ENCODE measurements at regions of chr5 and their contacts with region 1.

Region 1: DNA sequence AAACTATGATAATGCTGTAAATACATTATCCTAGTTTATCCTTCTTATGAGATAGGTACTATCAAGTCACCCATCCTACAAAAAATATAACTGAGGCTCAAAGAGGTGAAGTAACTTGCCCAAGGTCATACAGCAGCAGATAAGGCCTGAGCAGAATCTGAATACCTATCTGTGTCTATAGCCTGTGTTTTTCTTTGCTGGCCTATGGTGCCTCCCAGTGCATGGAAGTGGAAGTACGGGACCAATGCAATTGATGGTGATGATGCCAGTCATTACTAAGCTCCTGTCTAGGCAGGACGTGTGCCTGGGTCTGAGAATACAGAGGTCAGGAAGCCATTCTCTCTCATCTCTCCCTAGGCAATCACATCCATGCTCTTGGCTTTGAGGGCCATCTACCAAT is 67.8 kb downstream of the FAT2 start:
- DNase-seq: peak; percentile 60
- ATAC-seq: peak; percentile 92
- H3K4me3 ChIP-seq: no peak overlapping the region
- H3K27ac ChIP-seq: no peak overlapping the region
- H3K4me1 ChIP-seq: no peaks in the 10 kb centered on the region
- H3K27me3 ChIP-seq: peaks cover 0 to 12% of the 10 kb centered on the region in 2 experiments; a peak in 3 of 5 replicates
- CTCF ChIP-seq: peak; percentile 73
- EP300 ChIP-seq: no peak
- POLR2A ChIP-seq: no peak
- RAD21 ChIP-seq: peak; percentile 69

Region 2: DNA sequence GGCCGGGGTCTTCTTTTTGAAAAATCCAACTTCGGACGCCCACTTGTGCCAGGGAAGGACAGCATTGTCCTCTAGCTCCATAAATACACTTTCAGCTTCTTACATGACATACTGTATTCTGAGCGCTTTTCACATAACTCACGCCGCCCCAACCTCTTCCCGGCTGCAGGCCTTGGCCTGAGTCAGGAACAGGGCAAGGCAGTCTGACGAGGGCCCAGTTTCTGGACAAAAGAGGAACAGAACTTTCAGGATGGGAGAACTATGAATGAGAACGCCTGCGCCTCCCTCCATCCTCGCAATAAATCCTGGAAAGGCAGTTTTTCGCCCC is 765.2 kb before region 1 on chr5:
- CTCF ChIA-PET with region 1: no interaction called
- POLR2A ChIA-PET with region 1: no interaction called
- in situ Hi-C with region 1: no loop called
- intact Hi-C with region 1: no loop called
- DNase-seq: no peak
- ATAC-seq: peak; percentile 56
- H3K4me3 ChIP-seq: peak overlapping the region; percentile 84 to 93 (median 86)
- H3K27ac ChIP-seq: peak overlapping the region; percentile 93
- H3K4me1 ChIP-seq: peaks cover 58% of the 10 kb centered on the region
- H3K27me3 ChIP-seq: no peaks in the 10 kb centered on the region
- CTCF ChIP-seq: no peak
- EP300 ChIP-seq: no peak
- POLR2A ChIP-seq: peak in 1 of 2 experiments; percentile 63; a peak in 2 of 4 replicates
- RAD21 ChIP-seq: no peak

Region 3: GRCh38 chr5:151592855-151593408 is 69.6 kb after region 1 on chr5:
- CTCF ChIA-PET with region 1: no interaction called
- POLR2A ChIA-PET with region 1: no interaction called
- in situ Hi-C with region 1: no loop called
- intact Hi-C with region 1: no loop called
- DNase-seq: peak; percentile 66
- ATAC-seq: peak; percentile 80
- H3K4me3 ChIP-seq: no peak overlapping the region
- H3K27ac ChIP-seq: no peak overlapping the region
- H3K4me1 ChIP-seq: peaks cover 25% of the 10 kb centered on the region
- H3K27me3 ChIP-seq: peaks cover 3 to 20% of the 10 kb centered on the region in 2 experiments; a peak in 3 of 5 replicates
- CTCF ChIP-seq: no peak
- EP300 ChIP-seq: no peak
- POLR2A ChIP-seq: no peak
- RAD21 ChIP-seq: no peak

Region 4: GRCh38 chr5:151740336-151740942 is 217.1 kb after region 1 on chr5:
- CTCF ChIA-PET with region 1: no interaction called
- POLR2A ChIA-PET with region 1: no interaction called
- in situ Hi-C with region 1: loop called (anchors 10 kb)
- intact Hi-C with region 1: loop called (anchors 5 kb)
- DNase-seq: peak; percentile 30
- ATAC-seq: peak; percentile 74
- H3K4me3 ChIP-seq: no peak overlapping the region
- H3K27ac ChIP-seq: no peak overlapping the region
- H3K4me1 ChIP-seq: no peaks in the 10 kb centered on the region
- H3K27me3 ChIP-seq: no peaks in the 10 kb centered on the region
- CTCF ChIP-seq: peak; percentile 76
- EP300 ChIP-seq: no peak
- POLR2A ChIP-seq: no peak
- RAD21 ChIP-seq: peak; percentile 54; the same call in 1 of the 2 replicates